Calu3 (cell line): ENCODE measurements at regions of chr6 and their contacts with region 1.

Region 1: DNA sequence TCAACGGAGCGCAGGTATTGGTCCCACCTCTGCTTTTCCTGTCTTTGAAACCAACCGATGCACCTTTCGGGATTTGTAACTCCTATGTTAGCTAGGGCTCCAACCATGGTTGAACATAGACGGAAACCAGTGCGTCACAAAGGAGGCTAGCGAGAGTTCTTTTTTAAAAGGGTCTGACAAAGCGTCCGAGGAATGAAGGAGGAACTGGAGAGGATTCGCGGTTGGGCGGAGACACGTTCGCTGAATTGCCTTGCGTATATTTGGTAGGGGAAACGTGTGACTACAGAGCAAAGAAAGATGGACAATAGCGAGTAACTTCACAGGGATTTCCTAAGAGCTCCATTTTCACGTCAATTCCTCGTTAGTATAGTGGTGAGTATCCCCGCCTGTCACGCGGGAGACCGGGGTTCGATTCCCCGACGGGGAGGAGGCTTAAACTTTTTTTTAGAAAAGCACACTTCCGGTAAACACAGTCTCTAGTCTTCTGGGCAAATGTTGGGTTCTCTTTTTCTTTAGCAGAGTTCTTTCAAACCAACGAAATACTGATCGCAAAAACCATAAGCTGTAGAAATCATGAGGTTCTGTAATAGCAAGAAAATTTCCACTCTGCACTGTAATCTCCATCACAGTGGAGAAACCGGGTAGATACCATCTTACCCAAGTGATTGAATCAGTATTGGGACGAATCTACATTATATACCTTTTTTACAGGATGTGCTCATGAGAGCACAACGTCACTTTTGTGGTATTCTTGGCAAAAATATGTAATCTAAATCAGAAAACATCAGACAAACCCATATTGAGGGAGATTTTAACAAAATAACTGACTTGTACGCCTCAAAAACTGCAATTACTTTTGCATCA is 6.6 kb upstream of the ZNF184 start:
- DNase-seq: peak; percentile 88
- H3K4me3 Mint-ChIP-seq: no peak overlapping the region
- H3K27ac Mint-ChIP-seq: no peak overlapping the region
- H3K4me1 Mint-ChIP-seq: no peaks in the 10 kb centered on the region
- H3K27me3 Mint-ChIP-seq: no peaks in the 10 kb centered on the region
- CTCF ChIP-seq: no peak

Region 2: GRCh38 chr6:27177485-27178406 is 301.8 kb before region 1 on chr6:
- CTCF ChIA-PET with region 1: no interaction called
- intact Hi-C with region 1: loop called (anchors 5 kb)
- DNase-seq: peak; percentile 92
- H3K4me3 Mint-ChIP-seq: peak overlapping the region; percentile 86
- H3K27ac Mint-ChIP-seq: peak overlapping the region; percentile 99
- H3K4me1 Mint-ChIP-seq: no peaks in the 10 kb centered on the region
- H3K27me3 Mint-ChIP-seq: peaks cover 20% of the 10 kb centered on the region
- CTCF ChIP-seq: peak; percentile 45